ENCODE measurements at regions of chr20 and their contacts with region 1.

Region 1: DNA sequence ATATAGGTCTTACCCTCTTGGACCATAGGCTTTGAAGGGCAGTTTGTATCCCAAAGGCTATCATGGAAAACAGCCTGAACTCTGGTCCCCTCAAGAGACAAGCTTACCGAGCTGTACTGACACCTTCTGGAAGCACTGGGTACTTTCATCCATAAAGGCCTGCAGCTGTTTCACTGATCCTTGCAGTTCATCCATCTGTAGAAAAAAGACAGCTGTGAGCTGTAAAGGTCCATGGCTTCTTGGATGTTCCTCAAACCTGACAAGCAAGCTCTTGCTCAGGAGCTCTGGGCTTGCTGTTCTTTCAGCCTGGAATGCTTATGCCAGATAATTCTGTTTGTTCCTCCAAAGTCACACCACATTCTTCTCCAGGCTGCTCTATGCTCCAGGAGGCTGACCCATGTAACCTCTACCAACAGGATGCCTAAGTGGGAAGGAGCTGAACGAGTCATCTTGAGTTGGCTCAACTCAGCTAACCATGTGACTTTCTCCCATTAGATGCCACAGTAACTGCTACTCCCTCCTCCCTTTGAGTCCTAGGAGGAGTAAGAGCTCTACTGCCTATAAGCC is 8.8 kb upstream of the NDRG3 start:
- DNase-seq: peak; percentile 60 to 76 (median 68)
- H3K4me3 ChIP-seq: no peak overlapping the region
- H3K27ac ChIP-seq: no peak overlapping the region
- H3K4me1 ChIP-seq: peaks cover 5 to 24% (median 12%) of the 10 kb centered on the region in 4 experiments
- H3K27me3 ChIP-seq: no peaks in the 10 kb centered on the region

Region 2: GRCh38 chr20:36506253-36506652 is 248.5 kb before region 1 on chr20:
- CTCF ChIA-PET with region 1: interaction called, 11 read pairs
- POLR2A ChIA-PET with region 1: no interaction called
- DNase-seq: peak; percentile 49 to 60 (median 59)
- H3K4me3 ChIP-seq: no peak overlapping the region
- H3K27ac ChIP-seq: no peak overlapping the region
- H3K4me1 ChIP-seq: no peaks in the 10 kb centered on the region
- H3K27me3 ChIP-seq: no peaks in the 10 kb centered on the region

Region 3: DNA sequence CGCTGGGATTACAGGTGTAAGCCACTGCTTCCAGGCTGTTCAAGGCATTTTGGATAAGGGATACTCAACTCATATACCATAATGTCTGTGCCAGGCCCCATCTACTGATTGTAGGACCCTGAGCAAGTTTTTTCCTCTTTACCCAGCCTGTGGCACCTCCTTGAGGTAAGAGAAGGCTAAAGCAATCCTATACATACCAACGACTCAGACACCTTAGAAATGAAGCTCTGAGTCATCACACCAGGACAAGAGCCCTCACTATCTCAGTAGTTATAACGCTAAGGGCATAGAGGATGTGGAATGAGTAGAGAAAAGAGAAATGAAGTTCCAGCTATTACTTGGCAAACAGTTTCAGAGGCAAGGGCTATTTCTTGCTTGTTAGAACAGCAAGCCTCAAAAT is 25.8 kb before region 1 on chr20:
- CTCF ChIA-PET with region 1: no interaction called
- POLR2A ChIA-PET with region 1: no interaction called
- DNase-seq: peak; percentile 36 to 64 (median 62)
- H3K4me3 ChIP-seq: no peak overlapping the region
- H3K27ac ChIP-seq: no peak overlapping the region
- H3K4me1 ChIP-seq: peaks cover 0 to 9% (median 5%) of the 10 kb centered on the region in 4 experiments
- H3K27me3 ChIP-seq: no peaks in the 10 kb centered on the region

Region 4: DNA sequence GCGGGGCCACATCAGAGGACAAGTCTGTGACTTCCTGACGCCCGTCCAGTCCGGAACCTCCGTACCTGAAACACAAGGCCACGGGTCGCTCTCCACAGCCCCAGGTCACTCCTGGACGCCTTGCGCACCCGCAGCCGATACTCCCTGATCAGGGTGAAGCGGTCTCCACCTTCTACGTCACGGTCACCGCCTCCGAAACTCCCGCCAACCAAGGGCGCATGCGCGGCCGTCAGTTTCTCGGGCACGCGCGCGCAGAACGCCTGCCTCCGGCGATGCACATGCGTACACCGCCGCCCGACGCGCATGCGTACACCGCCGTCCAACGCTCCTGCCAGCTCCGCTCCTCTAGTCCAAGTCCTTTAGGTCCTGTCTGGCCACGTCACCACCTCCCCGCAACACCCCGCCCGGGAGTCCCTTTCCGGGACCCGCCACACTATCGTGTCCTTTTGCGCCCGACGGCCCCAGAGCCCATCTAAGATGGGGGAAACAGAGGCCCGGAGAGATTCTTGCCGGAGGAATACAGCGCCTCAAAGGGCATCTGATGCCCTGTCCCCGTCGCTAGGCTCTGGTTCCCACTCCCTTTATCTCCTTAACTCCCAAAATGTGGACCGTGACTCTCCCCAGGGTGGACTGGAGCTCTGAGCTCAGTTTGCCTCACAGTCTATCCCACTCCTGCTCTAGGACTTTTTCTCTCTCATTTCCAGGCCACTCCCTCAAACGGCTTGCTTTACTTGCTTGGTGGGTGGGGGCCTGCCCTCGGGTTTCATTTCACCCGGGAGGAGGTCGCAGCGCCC is 19.1 kb after region 1 on chr20 and contains the start of gene DSN1:
- CTCF ChIA-PET with region 1: interaction called, 20 read pairs
- POLR2A ChIA-PET with region 1: interaction called, 3 read pairs
- DNase-seq: peak; percentile 93 to 96 (median 95)
- H3K4me3 ChIP-seq: peak within 1 kb of the TSS; percentile 77 to 98 (median 90)
- H3K27ac ChIP-seq: peak within 1 kb of the TSS; percentile 83 to 94
- H3K4me1 ChIP-seq: peaks cover 6 to 14% (median 10%) of the 10 kb centered on the region in 4 experiments
- H3K27me3 ChIP-seq: no peaks in the 10 kb centered on the region

Region 5: DNA sequence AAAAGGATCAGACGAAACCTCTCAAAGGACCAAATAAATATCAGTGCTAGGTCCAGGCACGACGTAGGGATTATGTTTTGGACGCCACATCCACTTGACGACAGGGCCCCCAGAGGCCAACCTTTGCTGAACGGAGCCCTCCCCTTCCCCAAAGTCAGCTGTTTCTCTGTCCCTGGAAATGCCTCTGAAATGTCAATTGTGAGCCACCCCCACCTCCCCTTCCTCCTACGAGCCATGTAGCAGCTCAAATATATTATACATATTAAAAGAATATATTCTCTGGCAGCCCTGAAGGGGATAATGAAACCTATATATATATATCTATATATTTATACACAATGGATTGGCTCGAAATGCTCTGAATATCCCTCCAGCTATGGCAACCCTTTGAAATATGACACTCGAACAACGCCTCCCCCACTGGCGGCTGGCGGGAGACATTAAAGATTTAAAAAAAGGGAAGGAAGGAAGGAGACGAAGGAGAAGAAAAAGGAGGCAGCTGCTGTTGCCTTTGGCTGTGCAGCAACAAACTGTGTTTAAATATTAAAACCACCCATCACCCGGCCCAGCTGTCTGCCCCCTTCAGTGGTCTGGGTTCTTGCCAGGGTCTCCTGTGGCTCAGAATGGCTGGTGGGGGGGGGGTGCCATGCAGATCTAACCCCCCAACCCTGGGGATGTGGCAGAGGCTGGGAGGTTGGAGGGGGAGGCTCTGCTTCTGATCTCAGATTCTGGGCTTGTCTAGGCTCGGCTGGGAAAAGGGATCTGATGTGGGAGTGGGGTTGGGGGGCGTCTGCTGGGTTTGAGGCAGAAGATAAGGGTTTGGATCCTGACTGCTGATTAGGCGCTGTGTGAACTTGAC is 812.8 kb after region 1 on chr20:
- CTCF ChIA-PET with region 1: no interaction called
- POLR2A ChIA-PET with region 1: no interaction called
- DNase-seq: peak; percentile 24 to 79 (median 71)
- H3K4me3 ChIP-seq: peak overlapping the region in 1 of 7 experiments; percentile 12
- H3K27ac ChIP-seq: no peak overlapping the region
- H3K4me1 ChIP-seq: peaks cover 0 to 18% (median 17%) of the 10 kb centered on the region in 4 experiments
- H3K27me3 ChIP-seq: peaks cover 0 to 63% (median 8%) of the 10 kb centered on the region in 5 experiments